K562 (cell line): ENCODE measurements at regions of chr14 and their contacts with region 1.

Region 1: DNA sequence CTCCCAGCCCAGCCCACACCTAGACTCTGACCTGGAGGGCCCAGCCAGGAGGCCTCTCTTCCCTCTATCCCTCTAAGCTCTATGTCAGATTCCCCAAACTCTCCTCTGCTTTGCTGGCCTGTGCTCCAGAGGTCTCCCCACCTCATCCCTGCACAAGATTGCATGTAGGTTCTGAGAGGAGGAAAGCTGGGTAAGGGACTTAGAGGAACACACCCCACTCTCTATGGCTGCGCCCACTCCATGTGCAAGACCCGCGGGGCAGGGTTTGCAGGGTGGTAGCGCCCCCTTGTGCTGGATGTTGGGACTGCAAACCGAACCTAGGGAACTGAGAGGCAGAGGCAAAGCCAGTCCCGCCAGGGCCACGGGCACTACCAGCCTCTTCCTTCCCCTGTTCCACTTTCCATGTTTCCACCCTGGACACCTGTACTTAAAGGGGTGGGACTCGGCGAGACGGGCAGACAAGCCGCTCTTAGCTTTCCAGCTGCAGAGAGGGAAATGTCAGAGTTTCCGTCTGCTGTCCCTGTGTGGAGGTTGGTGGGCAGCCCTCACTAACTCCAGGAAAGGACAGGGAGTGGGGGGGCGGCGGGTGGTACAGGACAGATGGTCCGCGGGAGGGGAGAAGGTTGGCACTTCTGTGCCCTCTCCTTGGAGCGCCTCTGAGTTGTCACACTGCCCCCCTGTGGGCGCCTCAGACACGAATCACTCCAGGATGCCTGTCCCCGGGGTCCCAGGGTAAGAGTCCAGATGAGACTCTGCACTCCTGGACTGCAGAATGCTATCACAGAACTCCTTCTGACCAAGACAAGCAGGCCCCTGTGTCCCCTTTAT is 16.8 kb downstream of the MMP14 start:
- DNase-seq: peak; percentile 81 to 88 (median 86)
- ATAC-seq: peak; percentile 95
- H3K4me3 ChIP-seq: peak overlapping the region; percentile 47
- H3K27ac ChIP-seq: peak overlapping the region; percentile 86
- H3K4me1 ChIP-seq: peaks cover under 1 to 23% of the 10 kb centered on the region in 2 experiments; a peak in 3 of 5 replicates
- H3K27me3 ChIP-seq: no peaks in the 10 kb centered on the region
- CTCF ChIP-seq: peak; percentile 94 to 97 (median 95)
- EP300 ChIP-seq: no peak
- POLR2A ChIP-seq: no peak
- RAD21 ChIP-seq: peak; percentile 97 to 99

Region 2: GRCh38 chr14:22570132-22570949 is 282.8 kb before region 1 on chr14:
- CTCF ChIA-PET with region 1: interaction called, 19 read pairs
- POLR2A ChIA-PET with region 1: no interaction called
- in situ Hi-C with region 1: loop called (anchors 10 kb)
- intact Hi-C with region 1: loop called (anchors 1 kb)
- DNase-seq: peak; percentile 71 to 89 (median 76)
- ATAC-seq: peak; percentile 95
- H3K4me3 ChIP-seq: no peak overlapping the region
- H3K27ac ChIP-seq: no peak overlapping the region
- H3K4me1 ChIP-seq: no peaks in the 10 kb centered on the region
- H3K27me3 ChIP-seq: no peaks in the 10 kb centered on the region
- CTCF ChIP-seq: peak; percentile 77 to 99 (median 95)
- EP300 ChIP-seq: no peak
- POLR2A ChIP-seq: no peak
- RAD21 ChIP-seq: peak; percentile 86 to 91

Region 3: DNA sequence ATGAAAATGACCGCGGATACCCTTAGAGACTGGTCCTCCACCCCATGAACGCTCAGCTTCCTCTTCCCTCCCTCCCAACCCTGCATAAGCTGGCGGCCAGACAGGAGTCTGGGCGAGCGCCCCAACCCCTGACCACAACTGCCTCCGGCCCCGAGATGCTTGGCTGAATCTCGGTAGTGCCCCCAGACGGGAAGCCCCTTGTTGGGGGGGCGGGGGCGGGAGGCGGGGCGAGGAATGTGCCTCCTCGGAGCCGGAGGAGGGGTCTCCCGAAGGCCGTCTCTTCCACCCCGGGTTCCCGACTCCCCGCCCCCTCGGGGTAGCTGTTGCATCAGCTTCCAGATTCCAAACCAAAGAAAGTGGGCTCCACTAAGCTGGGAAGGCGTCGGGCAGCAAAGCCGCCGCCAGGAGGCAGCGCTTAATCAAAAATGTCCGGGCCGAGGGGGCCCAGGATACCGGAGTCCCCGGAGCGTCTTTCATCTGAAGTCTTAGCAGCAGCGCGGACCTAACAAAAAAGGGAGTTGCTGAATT is 30.5 kb before region 1 on chr14:
- CTCF ChIA-PET with region 1: interaction called, 44 read pairs
- POLR2A ChIA-PET with region 1: interaction called, 5 read pairs
- in situ Hi-C with region 1: no loop called
- intact Hi-C with region 1: loop called (anchors 1 kb)
- DNase-seq: peak; percentile 77 to 87 (median 82)
- ATAC-seq: peak; percentile 88
- H3K4me3 ChIP-seq: no peak overlapping the region
- H3K27ac ChIP-seq: no peak overlapping the region
- H3K4me1 ChIP-seq: peaks cover 18 to 30% of the 10 kb centered on the region in 2 experiments; a peak in 4 of 5 replicates
- H3K27me3 ChIP-seq: no peaks in the 10 kb centered on the region
- CTCF ChIP-seq: peak; percentile 89 to 95 (median 91)
- EP300 ChIP-seq: 0 out of 2 replicates have a peak, but pooled peaks have one; percentile 5
- POLR2A ChIP-seq: no peak
- RAD21 ChIP-seq: peak; percentile 92 to 94

Region 4: DNA sequence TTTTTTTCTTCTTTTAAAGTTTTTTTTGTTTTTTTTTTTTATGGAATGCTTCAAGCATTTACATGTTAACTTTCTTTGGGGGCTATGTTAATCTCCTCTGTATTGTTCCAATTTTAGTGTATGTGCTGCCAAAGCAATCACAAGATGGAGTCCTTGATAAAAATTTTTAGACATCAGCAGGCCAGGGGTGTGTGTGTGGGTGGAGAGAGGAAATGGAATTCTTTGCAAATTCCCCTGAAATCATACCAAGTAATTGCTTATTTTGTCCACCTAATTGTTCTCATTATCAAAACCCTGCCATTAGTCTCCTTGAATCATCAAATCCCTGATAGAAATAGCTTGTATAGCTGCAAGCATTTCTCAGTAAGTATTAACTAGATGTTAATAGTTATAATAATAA is 406.3 kb after region 1 on chr14:
- CTCF ChIA-PET with region 1: no interaction called
- POLR2A ChIA-PET with region 1: no interaction called
- in situ Hi-C with region 1: no loop called
- intact Hi-C with region 1: loop called (anchors 2 kb)
- DNase-seq: no peak
- ATAC-seq: no peak
- H3K4me3 ChIP-seq: no peak overlapping the region
- H3K27ac ChIP-seq: no peak overlapping the region
- H3K4me1 ChIP-seq: peaks cover 0 to 7% of the 10 kb centered on the region in 2 experiments; a peak in 2 of 5 replicates
- H3K27me3 ChIP-seq: no peaks in the 10 kb centered on the region
- CTCF ChIP-seq: no peak
- EP300 ChIP-seq: no peak
- POLR2A ChIP-seq: no peak
- RAD21 ChIP-seq: no peak